ENCODE measurements at regions of chr6 and their contacts with region 1.

Region 1: DNA sequence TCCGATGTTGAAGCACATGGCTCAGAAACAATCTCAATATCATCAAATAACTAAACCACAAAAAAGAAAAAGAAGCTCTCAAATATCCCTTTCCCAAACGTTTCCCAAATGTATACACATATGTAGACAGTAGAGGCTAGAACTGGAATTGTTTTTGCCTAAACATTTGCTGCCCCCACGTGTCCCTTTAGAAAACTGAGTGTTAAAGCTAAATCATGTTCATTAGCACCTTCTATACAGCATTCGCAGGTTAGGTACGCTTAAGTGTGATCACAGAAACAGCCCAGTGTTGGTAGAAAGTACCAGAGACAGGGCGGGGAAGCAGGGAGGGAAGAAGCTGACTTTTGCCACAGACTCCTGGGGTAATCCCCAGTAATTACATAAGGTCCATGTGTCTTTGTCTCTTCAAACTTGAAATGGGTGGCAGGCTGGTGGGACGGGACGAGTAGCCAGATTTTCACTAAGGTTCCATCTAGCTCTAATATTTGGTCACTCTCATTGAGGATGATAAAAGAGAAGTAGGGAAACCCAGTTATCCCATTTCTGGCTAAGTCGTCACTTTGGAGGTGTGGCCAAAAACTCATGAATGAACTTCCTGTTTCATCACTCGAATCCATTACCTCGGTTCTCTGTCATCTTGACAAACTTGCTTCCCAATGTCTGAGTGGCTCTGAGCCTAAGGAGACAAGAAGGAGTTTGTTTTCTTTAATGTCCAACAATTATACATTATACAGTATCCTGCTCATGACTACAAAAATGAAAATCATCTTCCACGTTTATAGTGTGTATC is 15.0 kb upstream of the TFAP2A start:
- DNase-seq: no peak
- H3K4me3 Mint-ChIP-seq: peak overlapping the region; percentile 43
- H3K27ac Mint-ChIP-seq: no peak overlapping the region
- H3K4me1 Mint-ChIP-seq: peaks cover 20% of the 10 kb centered on the region
- H3K27me3 Mint-ChIP-seq: peaks cover 45% of the 10 kb centered on the region

Region 2: DNA sequence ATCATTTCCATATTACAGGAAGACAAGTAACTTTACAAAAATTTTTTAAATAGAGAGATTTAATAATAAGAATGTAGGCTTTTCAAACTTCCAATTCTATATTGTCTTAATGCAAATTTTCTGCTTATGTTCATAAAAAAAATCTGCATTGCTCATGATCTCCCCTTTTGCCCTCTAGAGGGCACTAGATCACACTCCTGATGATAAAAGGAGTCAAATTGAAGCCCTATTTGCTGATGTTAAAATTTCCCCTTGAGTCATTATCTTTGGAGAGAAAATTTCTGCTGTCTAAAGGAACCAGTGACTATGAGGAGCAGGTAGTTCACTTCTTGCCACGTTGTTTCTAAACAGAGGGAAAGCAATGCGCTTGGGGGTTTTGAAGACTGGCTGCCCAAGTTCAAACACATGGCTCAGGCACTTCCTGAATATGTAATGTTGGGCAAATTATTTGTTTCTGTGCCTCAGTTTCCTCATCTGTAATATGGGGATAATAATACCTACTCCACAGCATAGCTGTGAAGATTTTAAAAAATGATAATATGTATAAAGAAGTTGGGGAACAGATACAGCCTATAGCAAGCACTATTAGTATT is 889.2 kb before region 1 on chr6:
- CTCF ChIA-PET with region 1: interaction called, 5 read pairs
- POLR2A ChIA-PET with region 1: no interaction called
- intact Hi-C with region 1: loop called (anchors 2 kb)
- DNase-seq: no peak
- H3K4me3 Mint-ChIP-seq: no peak overlapping the region
- H3K27ac Mint-ChIP-seq: no peak overlapping the region
- H3K4me1 Mint-ChIP-seq: no peaks in the 10 kb centered on the region
- H3K27me3 Mint-ChIP-seq: no peaks in the 10 kb centered on the region